MCF 10A (cell line): ENCODE measurements at regions of chr1 and their contacts with region 1.

Region 1: GRCh38 chr1:163071405-163072255 is 2.5 kb downstream of the RGS4 start:
- DNase-seq: peak; percentile 90
- H3K4me3 Mint-ChIP-seq: no peak overlapping the region
- H3K27ac Mint-ChIP-seq: no peak overlapping the region
- H3K4me1 Mint-ChIP-seq: peaks cover 5% of the 10 kb centered on the region
- H3K27me3 Mint-ChIP-seq: peaks cover 44% of the 10 kb centered on the region
- CTCF ChIP-seq: peak; percentile 88

Region 2: GRCh38 chr1:162854245-162854882 is 217.3 kb before region 1 on chr1:
- CTCF ChIA-PET with region 1: interaction called, 30 read pairs
- POLR2A ChIA-PET with region 1: no interaction called
- intact Hi-C with region 1: loop called (anchors 2 kb)
- DNase-seq: peak; percentile 88
- H3K4me3 Mint-ChIP-seq: no peak overlapping the region
- H3K27ac Mint-ChIP-seq: no peak overlapping the region
- H3K4me1 Mint-ChIP-seq: peaks cover 32% of the 10 kb centered on the region
- H3K27me3 Mint-ChIP-seq: peaks cover 33% of the 10 kb centered on the region
- CTCF ChIP-seq: peak; percentile 71

Region 3: DNA sequence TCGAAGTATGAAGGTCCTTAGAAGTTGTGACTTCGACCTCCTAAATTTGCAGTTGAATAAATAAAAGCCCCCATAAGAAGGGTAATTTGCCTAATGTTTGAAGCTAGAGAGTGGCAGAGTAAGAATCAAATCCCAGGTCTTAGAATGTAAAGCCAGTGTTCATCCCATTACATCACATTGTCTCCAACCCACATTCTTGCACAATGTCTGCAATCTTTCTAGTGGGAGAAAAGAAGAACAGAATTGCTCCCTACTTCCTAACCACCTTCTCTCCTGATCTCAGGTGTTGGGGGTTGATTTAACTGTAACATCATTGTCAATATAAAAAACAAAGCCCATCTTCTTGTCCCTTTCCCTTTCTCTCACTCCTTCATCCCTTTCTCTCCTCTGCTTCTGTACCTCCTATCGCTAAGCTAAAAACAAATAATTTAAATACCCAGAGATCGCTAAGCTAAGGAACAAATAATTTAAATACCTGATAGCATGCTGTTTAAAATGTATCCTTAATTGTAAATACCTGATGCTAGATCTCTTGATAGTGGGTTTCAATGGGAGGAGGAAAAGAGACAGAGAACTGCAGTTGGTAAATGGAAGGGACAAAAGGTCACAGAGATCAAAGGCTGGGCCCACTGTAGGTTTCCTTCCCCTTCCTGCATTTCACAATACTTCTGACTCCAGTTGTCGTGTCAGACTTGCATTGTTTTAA is 178.6 kb before region 1 on chr1:
- CTCF ChIA-PET with region 1: interaction called, 7 read pairs
- POLR2A ChIA-PET with region 1: no interaction called
- intact Hi-C with region 1: loop called (anchors 5 kb)
- DNase-seq: peak; percentile 75
- H3K4me3 Mint-ChIP-seq: no peak overlapping the region
- H3K27ac Mint-ChIP-seq: no peak overlapping the region
- H3K4me1 Mint-ChIP-seq: peaks cover 14% of the 10 kb centered on the region
- H3K27me3 Mint-ChIP-seq: no peaks in the 10 kb centered on the region
- CTCF ChIP-seq: no peak

Region 4: DNA sequence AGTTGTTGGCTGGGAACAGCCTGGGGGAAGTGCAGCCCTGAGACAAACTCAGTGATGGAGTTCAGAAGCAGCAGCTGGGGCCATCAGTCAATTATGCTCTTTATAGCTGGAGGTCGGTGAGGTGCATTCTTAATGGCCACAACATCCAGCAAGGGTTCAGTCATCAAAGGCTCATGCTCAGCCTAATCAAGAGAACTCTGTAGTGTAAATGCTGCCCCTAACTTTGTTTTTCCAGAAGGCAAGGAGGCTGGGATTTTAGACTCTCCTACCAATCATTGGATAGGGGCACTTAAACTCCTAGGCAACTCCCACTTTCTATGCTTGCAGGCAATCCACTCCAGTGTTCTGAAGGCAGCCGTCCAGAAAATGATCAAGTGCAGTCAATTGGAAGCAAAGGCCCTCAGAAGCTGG is 17.4 kb before region 1 on chr1:
- CTCF ChIA-PET with region 1: interaction called, 12 read pairs
- POLR2A ChIA-PET with region 1: no interaction called
- intact Hi-C with region 1: no loop called
- DNase-seq: no peak
- H3K4me3 Mint-ChIP-seq: no peak overlapping the region
- H3K27ac Mint-ChIP-seq: no peak overlapping the region
- H3K4me1 Mint-ChIP-seq: peaks cover 11% of the 10 kb centered on the region
- H3K27me3 Mint-ChIP-seq: no peaks in the 10 kb centered on the region
- CTCF ChIP-seq: no peak

Region 5: GRCh38 chr1:163106364-163106987 is 34.8 kb after region 1 on chr1:
- CTCF ChIA-PET with region 1: interaction called, 15 read pairs
- POLR2A ChIA-PET with region 1: no interaction called
- intact Hi-C with region 1: no loop called
- DNase-seq: peak; percentile 18
- H3K4me3 Mint-ChIP-seq: no peak overlapping the region
- H3K27ac Mint-ChIP-seq: no peak overlapping the region
- H3K4me1 Mint-ChIP-seq: no peaks in the 10 kb centered on the region
- H3K27me3 Mint-ChIP-seq: no peaks in the 10 kb centered on the region
- CTCF ChIP-seq: no peak

Region 6: DNA sequence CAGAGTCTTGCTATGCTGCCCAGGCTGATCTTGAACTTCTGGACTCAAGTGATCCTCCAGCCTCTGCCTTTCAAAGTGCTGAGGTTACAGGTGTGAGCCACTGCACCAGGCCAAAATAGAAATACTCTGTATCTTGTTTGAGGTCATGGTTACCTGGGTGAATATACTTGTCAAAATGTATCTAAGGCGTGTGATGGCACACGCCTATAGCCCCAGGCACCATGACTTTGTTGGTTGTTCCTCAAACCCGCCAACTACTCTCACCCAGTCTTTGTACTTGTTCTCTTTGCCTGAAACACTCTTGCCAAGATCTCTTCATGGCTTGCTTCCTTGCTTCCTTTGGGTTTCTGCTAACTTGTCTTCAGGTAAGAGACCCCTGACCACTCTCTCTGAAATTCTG is 169.1 kb after region 1 on chr1:
- CTCF ChIA-PET with region 1: no interaction called
- POLR2A ChIA-PET with region 1: no interaction called
- intact Hi-C with region 1: no loop called
- DNase-seq: peak; percentile 48
- H3K4me3 Mint-ChIP-seq: no peak overlapping the region
- H3K27ac Mint-ChIP-seq: peak overlapping the region; percentile 69
- H3K4me1 Mint-ChIP-seq: peaks cover 7% of the 10 kb centered on the region
- H3K27me3 Mint-ChIP-seq: no peaks in the 10 kb centered on the region
- CTCF ChIP-seq: no peak

Region 7: GRCh38 chr1:163275222-163275621 is 203.6 kb after region 1 on chr1:
- CTCF ChIA-PET with region 1: no interaction called
- POLR2A ChIA-PET with region 1: no interaction called
- intact Hi-C with region 1: no loop called
- DNase-seq: peak; percentile 13
- H3K4me3 Mint-ChIP-seq: no peak overlapping the region
- H3K27ac Mint-ChIP-seq: no peak overlapping the region
- H3K4me1 Mint-ChIP-seq: no peaks in the 10 kb centered on the region
- H3K27me3 Mint-ChIP-seq: no peaks in the 10 kb centered on the region
- CTCF ChIP-seq: no peak

Region 8: GRCh38 chr1:163315773-163316374 is 244.2 kb after region 1 on chr1:
- CTCF ChIA-PET with region 1: interaction called, 111 read pairs
- POLR2A ChIA-PET with region 1: no interaction called
- intact Hi-C with region 1: loop called (anchors 1 kb)
- DNase-seq: peak; percentile 68
- H3K4me3 Mint-ChIP-seq: no peak overlapping the region
- H3K27ac Mint-ChIP-seq: no peak overlapping the region
- H3K4me1 Mint-ChIP-seq: peaks cover 4% of the 10 kb centered on the region
- H3K27me3 Mint-ChIP-seq: no peaks in the 10 kb centered on the region
- CTCF ChIP-seq: peak; percentile 61